ENCODE measurements at regions of chr14 and their contacts with region 1.

Region 1: DNA sequence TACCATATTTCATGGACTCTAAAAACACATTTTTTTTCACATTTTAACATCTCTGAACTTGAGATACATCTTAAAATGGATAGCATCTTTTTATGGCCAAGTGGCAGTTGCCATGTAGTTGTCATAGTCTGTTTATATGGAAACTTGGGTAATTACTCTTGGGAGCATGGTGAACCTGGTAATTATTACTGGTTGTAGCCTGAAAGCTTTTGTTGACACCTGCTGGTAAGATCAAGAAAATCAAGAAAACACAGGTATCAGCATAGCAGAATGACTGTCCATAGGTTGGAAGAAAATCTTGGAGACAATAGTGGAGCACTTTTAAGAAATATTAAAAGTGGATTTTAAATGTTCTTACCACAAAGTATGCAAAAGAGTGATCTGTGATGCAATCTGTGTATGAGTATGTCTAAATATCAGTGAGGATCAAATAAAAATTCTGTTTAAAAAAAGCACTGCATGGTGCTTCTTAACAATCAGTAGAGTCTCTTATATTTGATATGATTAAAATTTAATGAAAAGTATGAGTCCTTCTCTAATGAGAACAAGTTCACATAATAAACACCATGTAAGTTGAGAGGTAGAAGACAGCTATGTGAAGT is 44.2 kb downstream of the TTC8 start:
- DNase-seq: no peak
- ATAC-seq: no peak

Region 2: DNA sequence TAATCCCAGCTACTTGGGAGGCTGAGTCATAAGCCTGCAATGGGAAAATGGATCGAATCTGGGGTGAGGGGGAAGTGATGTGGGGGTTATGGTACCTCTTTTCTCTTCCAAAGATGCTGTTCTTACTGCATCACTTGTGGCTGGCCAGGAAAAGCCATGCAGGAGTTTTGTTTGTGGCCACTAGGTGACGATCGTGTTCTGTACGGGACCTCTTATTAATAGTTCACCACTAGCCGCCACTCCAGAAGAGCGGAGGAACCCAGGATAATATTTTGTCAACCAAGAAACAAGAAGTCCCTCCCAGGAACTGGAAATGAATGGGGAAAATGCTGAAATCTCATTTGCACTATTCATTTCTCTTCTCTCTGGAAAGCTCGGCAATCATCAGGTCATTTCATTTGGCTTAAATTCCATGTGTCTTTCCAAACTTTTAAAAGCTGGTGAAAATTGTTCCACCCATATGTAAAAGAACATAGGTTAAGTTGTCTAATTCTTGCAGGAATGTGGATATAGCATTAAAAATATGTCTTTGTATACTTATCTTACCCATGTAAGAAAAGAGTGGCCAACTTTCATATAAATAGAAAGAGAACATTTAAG is 854.8 kb before region 1 on chr14:
- intact Hi-C with region 1: loop called (anchors 5 kb)
- DNase-seq: no peak
- ATAC-seq: peak; percentile 88

Region 3: DNA sequence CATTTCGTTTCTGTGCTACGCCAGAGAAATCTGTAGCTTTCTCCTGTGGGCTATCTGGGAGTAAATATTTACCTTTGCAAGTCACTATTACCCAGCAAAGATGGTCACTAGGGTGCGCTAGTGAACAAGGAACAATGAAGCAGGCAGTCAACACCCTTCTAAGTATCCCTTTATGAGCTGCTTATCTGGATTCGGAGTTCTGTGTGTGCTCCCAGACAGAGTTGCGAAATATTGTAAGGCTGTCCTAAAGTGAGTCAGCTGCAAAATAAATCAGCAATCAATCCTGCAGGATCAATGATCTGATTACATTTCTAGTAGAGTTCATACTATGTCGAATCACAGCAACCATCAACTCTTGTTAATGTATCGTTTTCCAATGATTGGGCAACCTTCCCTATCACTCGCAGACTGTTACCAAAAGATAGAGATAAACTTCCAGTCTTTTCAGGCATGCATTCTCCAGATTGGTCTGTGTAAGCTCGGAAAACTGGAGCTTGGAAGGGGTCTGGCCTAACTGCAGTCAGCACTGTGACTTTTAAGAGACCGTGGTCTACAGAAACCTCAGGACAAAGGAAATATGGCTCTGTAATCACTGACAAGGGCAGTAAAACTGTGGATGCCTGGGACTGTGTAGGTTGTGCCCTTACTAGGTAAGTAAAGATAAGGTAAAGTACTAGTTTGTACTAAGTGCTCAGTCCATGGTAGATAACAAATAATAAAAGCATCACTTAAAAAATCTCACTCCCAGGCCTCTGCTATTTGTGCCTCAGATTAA is 679.1 kb before region 1 on chr14:
- intact Hi-C with region 1: loop called (anchors 5 kb)
- DNase-seq: no peak
- ATAC-seq: peak; percentile 93

Region 4: DNA sequence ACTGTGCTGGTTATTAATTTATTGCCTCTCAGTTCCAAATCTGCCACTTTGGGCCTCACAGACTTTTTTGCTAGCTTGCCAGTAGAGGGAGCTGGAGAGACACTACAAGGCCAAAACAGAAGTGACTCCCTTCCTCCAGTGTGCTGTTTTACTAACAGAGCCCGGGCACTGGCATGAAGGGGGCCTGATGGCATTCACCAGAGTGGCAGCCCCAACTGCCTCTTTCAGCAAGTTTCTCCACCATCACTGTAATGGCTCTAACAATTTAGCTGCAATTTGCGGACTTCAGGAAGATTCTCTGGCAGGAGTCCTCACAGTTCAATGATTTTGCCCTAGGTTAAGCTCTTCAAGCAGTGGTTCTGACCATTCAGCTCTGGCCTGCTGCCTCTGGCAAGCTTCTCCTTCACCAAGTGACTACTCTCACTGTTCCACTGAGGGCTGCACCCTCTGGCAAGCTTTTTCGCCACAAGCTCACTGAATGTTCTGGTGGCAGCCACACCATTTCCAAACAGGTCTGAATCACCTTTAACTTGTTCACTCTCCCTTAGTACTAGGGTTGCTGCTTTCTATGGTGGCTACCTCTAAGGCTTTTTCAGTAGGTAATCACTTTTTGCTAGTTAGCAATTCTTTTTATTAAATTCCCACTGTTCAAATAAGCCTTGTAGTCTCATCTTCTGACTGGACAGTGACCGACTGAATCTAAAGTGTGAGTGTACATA is 200.9 kb before region 1 on chr14:
- intact Hi-C with region 1: loop called (anchors 2 kb)
- DNase-seq: no peak
- ATAC-seq: peak; percentile 72

Measured in Right ventricle myocardium inferior (tissue), 1 donor.